Heart left ventricle (tissue), 16 donors: ENCODE measurements at regions of chr17 and their contacts with region 1.

Region 1: DNA sequence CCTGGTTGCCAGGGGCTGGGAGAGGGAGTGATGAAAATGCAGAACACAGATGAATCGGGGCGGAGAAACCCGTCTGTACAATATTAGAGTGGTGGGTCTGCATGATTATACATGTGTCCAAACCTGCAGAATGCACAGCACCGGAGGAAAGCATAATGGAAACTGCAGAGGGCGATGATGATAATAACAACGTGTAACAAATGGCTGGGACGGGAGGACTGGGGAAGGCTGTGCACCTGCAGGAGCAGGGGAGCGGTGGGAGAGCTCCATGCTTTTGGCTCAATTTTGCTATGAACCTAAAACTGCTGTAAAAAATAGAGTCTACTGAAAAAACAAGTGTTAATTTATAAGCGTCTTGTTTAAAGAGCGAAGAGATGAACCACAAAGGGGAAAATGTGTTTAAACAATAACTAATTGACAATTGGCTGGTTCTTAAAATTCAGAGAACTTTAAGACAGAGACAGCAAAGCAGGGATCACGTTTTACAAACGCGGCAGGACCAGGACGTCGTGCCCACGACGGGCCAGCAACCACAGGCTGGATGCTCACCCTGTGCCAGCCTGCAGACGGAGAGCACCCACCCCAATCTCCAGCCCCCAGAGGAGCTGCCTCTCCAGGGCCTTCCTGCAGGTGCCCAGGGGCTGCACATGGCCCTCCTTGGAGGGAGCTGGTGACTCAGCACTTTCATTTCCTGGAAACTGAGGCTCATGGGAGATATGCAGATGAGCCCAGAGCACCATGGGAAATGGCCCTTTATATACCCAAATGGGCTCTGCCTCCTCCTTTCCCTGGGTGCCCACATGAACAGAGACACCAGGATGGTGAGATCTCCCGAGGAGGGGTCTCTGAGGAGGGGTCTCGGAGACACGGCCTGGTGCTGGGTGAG is at the start of gene TEX19:
- DNase-seq: no peak
- ATAC-seq: no peak
- H3K4me3 ChIP-seq: no peak within 1 kb of the TSS
- H3K27ac ChIP-seq: no peak within 1 kb of the TSS
- H3K4me1 ChIP-seq: peaks cover 0 to 4% (median 0%) of the 10 kb centered on the region in 12 donors
- H3K27me3 ChIP-seq: peaks cover 0 to 32% (median 0%) of the 10 kb centered on the region in 9 donors
- CTCF ChIP-seq: no peak
- POLR2A ChIP-seq: no peak
- total RNA-seq, gene TEX19: not detected

Region 2: DNA sequence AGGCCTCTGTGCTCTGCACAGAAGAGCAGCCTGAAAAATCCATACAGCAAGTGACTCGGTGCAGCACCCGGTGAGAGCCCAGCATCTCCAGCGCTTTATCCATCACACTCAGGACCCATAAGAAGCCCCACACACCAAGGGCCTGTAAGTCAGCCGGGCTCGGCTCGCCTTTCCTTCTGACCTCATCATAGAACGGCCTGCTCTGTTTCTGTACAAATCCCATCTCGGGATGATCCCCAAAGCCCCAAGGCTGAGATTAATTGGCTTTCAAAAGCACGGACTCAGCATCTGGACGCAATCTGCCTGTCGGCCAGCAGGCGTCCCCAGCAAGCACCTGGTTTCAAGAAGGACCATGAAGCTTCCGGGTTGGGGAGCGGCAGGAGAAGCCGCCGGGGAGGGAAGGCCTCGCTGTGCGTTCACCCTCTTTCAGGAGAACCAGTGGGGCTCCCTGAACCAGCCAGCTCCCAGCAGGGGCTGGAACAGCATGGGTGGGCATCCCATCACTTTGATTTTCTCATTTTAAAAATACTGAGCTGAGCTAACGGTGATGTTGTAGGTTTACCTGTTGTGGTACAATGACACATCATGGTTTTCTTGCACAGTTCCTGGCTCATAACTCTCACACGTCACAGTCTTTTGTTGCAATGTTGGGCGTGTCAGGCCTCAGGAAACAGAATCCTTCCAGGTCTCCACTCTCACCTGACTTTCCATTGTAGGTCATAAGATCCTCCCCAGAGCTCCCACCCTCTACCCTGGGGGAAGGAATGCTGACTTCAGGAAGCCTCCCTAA is 152.8 kb before region 1 on chr17:
- intact Hi-C with region 1: no loop called
- DNase-seq: peak; percentile 81 to 91 (median 84)
- ATAC-seq: peak; percentile 57 to 87 (median 86)
- H3K4me3 ChIP-seq: peak overlapping the region in 7 of 12 donors; percentile 11 to 41 (median 17)
- H3K27ac ChIP-seq: peak overlapping the region in 11 of 12 donors; percentile 15 to 86 (median 48)
- H3K4me1 ChIP-seq: peaks cover 0 to 19% (median 8%) of the 10 kb centered on the region in 12 donors
- H3K27me3 ChIP-seq: no peaks in the 10 kb centered on the region
- CTCF ChIP-seq: peak; percentile 79 to 95 (median 92)
- POLR2A ChIP-seq: no peak

Region 3: DNA sequence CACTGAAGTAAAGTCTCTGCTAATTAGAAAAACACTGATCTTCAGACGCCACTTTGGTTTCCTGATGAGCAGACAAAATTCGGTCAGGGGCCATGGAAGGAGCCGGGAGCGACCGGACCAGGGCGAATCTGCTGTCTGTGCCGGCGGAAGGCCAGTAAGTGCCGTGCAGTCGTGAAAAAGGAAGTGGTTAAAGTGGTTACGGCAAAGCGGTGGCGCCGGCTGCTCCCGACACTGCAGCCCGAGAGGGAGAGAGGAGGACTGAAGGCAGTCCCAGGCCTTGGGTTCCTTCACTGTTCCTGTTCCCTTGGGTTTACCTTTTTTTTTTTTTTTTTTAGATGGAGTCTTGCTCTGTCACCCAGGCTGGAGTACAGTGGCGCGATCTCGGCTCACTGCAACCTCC is 42.1 kb after region 1 on chr17:
- intact Hi-C with region 1: loop called in 1 of 10 experiments (anchors 5 kb)
- DNase-seq: peak in 4 of 5 donors; percentile 48 to 82 (median 58)
- ATAC-seq: peak in 2 of 4 donors; percentile 40 to 55
- H3K4me3 ChIP-seq: peak overlapping the region in 1 of 12 donors; percentile 21
- H3K27ac ChIP-seq: peak overlapping the region in 1 of 12 donors; percentile 80
- H3K4me1 ChIP-seq: peaks cover 0 to 27% (median 1%) of the 10 kb centered on the region in 12 donors
- H3K27me3 ChIP-seq: no peaks in the 10 kb centered on the region
- CTCF ChIP-seq: no peak
- POLR2A ChIP-seq: no peak